ENCODE measurements at regions of chr16 and their contacts with region 1.

Region 1: GRCh38 chr16:86664533-86665318 is 86.4 kb downstream of the FOXL1 start:
- DNase-seq: peak; percentile 83
- H3K4me3 ChIP-seq: peak overlapping the region; percentile 34
- CTCF ChIP-seq: no peak

Region 2: DNA sequence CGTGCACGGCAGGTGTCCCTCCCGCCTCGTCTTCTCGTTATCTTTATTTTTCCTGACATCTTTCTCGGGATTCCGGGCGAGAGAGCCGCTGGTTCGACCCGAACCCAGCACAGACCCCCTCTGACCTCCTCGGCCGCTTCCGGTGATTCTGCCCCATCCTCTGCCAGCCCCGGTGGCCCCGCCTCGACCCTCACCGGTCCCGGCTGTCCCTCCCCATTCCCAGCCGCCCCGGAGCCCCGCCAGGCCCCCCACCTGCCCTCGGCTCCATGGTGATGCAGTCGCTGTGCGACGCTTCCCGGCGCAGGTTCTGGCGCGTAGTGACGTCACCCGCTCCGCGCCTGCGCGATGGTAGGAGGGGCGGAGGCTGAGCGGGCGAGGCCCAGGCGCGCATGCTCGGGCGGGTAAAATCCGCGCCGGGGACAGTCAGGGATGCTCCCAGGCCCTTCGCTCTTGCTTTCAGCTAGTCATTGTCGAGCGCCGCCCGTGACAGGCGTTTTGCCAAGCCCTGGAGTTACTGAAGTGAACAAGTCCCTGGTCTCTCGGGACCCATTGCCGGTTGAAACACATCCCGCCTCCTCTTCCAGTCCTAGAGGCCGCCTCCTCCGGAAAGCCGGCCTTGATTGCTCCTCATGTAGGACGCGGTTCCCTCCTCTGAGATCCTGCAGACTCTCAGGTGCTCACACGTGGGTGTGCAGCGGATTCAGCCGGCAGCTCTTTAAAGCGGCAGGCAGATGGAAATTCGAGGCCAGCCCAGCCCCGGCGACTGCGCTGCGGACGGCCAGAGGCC is 109.6 kb before region 1 on chr16 and contains the start of gene MTHFSD:
- CTCF ChIA-PET with region 1: no interaction called
- POLR2A ChIA-PET with region 1: no interaction called
- DNase-seq: no peak
- H3K4me3 ChIP-seq: peak within 1 kb of the TSS; percentile 96
- CTCF ChIP-seq: no peak

Region 3: GRCh38 chr16:86680162-86680561 is 15.4 kb after region 1 on chr16:
- CTCF ChIA-PET with region 1: interaction called, 3 read pairs
- POLR2A ChIA-PET with region 1: interaction called, 21 read pairs
- DNase-seq: peak; percentile 86
- H3K4me3 ChIP-seq: no peak overlapping the region
- CTCF ChIP-seq: no peak

Measured in AG04449 (cell line).